Caco-2 (cell line): ENCODE measurements at regions of chr10 and their contacts with region 1.

Region 1: DNA sequence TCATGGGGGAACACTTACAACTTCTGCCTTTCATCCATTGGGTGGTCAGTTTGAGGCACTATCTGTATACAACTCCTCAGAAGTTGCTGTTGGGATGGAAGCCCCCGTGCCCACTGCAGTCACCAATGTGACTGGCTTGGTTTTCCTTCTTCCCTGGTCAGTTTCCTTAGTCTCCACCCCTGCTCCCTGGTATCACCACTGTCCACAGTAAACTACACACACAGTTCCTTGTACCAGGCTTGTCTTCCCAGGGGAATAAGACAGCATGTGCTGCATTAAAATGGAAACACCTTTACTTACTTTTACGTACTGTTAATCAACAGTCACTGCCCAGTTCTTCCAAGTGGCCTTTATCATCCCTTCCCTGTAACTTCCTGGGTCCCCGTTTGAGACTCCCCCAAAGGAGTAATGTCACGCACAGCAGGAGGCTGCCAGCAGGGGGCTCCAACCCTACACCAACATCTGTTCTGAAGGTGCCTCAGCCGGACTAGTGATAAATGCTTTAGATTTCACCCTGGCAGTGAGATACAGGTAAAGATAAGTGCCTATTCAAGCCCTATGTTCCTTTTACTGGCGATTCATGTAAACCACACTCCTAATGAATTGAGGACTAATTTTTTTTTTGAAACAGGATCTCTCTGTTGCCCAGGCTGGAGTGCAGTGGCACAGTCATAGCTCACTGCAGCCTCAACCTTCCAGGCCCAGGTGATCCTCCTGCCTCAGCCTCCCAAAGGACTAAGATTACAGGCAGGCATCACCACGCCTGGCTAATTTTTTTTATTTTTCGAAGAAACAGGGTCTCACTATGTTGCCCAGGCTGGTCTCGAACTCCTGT is 45.3 kb upstream of the PIK3AP1 start:
- DNase-seq: peak; percentile 83 to 86
- H3K4me3 ChIP-seq: no peak overlapping the region
- H3K4me3 Mint-ChIP-seq: no peak overlapping the region
- H3K27ac Mint-ChIP-seq: no peak overlapping the region
- H3K4me1 ChIP-seq: peaks cover 9% of the 10 kb centered on the region
- H3K4me1 Mint-ChIP-seq: peaks cover 7% of the 10 kb centered on the region
- H3K27me3 ChIP-seq: no peaks in the 10 kb centered on the region
- H3K27me3 Mint-ChIP-seq: no peaks in the 10 kb centered on the region
- CTCF ChIP-seq: peak; percentile 94 to 96

Region 2: GRCh38 chr10:96719850-96720421 is 45.7 kb before region 1 on chr10:
- CTCF ChIA-PET with region 1: no interaction called
- POLR2A ChIA-PET with region 1: no interaction called
- intact Hi-C with region 1: no loop called
- DNase-seq: peak; percentile 63 to 73
- H3K4me3 ChIP-seq: peak overlapping the region; percentile 54
- H3K4me3 Mint-ChIP-seq: peak overlapping the region; percentile 84
- H3K27ac Mint-ChIP-seq: no peak overlapping the region
- H3K4me1 ChIP-seq: peaks cover 13% of the 10 kb centered on the region; the same call in 1 of the 2 replicates
- H3K4me1 Mint-ChIP-seq: no peaks in the 10 kb centered on the region
- H3K27me3 ChIP-seq: peaks cover 5% of the 10 kb centered on the region
- H3K27me3 Mint-ChIP-seq: peaks cover 19% of the 10 kb centered on the region
- CTCF ChIP-seq: peak; percentile 28 to 54

Region 3: GRCh38 chr10:96794866-96795733 is 29.5 kb after region 1 on chr10:
- CTCF ChIA-PET with region 1: interaction called, 3 read pairs
- POLR2A ChIA-PET with region 1: no interaction called
- intact Hi-C with region 1: loop called (anchors 2 kb)
- DNase-seq: peak; percentile 42 to 75
- H3K4me3 ChIP-seq: no peak overlapping the region
- H3K4me3 Mint-ChIP-seq: peak overlapping the region; percentile 8
- H3K27ac Mint-ChIP-seq: peak overlapping the region; percentile 56
- H3K4me1 ChIP-seq: peaks cover 49% of the 10 kb centered on the region
- H3K4me1 Mint-ChIP-seq: peaks cover 15% of the 10 kb centered on the region
- H3K27me3 ChIP-seq: no peaks in the 10 kb centered on the region
- H3K27me3 Mint-ChIP-seq: no peaks in the 10 kb centered on the region
- CTCF ChIP-seq: no peak

Region 4: DNA sequence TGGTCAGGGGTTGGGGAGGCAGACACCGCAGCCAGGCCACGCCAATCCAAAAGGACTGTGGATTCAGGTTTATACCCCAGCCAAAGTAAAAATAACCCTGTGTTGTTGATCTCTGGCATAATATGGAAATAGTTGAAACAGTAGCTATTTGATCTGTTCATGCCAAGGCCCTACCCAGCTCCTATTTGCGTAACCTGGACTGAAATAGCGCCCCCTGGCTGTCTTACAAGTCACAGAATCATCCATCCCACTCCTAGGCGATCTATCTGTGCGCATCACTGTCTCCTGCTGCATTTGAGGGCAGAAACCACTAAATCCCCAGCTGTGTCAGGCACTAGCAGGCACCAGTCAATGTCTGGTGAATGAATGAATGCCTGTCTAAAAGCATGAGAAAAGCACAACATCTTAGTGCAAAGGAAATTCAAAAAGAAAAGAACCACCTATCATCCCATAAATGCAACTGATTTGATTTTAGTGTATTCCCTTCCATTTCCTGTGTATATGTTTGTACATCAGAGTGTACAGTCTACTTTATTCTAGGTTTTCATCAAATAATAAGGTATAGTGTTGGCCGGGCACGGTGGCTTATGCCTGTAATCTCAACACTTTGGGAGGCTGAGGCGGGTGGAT is 260.1 kb after region 1 on chr10:
- CTCF ChIA-PET with region 1: interaction called, 5 read pairs
- POLR2A ChIA-PET with region 1: no interaction called
- intact Hi-C with region 1: loop called (anchors 5 kb)
- DNase-seq: peak in 1 of 2 experiments; percentile 36
- H3K4me3 ChIP-seq: no peak overlapping the region
- H3K4me3 Mint-ChIP-seq: no peak overlapping the region
- H3K27ac Mint-ChIP-seq: no peak overlapping the region
- H3K4me1 ChIP-seq: peaks cover 8% of the 10 kb centered on the region
- H3K4me1 Mint-ChIP-seq: peaks cover 15% of the 10 kb centered on the region
- H3K27me3 ChIP-seq: 0 out of 2 replicates have a peak, but pooled peaks cover 1% of the 10 kb centered on the region
- H3K27me3 Mint-ChIP-seq: no peaks in the 10 kb centered on the region
- CTCF ChIP-seq: peak; percentile 46 to 58